PC-3 (cell line): ENCODE measurements at regions of chr1 and their contacts with region 1.

Region 1: GRCh38 chr1:241627453-241628259 is 12.5 kb downstream of the CHML start:
- DNase-seq: peak; percentile 97
- ATAC-seq: peak; percentile 66
- H3K4me3 ChIP-seq: no peak overlapping the region
- H3K27ac ChIP-seq: 0 out of 2 replicates have a peak overlapping the region, but pooled peaks have one; percentile 0
- H3K4me1 ChIP-seq: peaks cover 33% of the 10 kb centered on the region
- H3K27me3 ChIP-seq: no peaks in the 10 kb centered on the region
- CTCF ChIP-seq: peak; percentile 98

Region 2: DNA sequence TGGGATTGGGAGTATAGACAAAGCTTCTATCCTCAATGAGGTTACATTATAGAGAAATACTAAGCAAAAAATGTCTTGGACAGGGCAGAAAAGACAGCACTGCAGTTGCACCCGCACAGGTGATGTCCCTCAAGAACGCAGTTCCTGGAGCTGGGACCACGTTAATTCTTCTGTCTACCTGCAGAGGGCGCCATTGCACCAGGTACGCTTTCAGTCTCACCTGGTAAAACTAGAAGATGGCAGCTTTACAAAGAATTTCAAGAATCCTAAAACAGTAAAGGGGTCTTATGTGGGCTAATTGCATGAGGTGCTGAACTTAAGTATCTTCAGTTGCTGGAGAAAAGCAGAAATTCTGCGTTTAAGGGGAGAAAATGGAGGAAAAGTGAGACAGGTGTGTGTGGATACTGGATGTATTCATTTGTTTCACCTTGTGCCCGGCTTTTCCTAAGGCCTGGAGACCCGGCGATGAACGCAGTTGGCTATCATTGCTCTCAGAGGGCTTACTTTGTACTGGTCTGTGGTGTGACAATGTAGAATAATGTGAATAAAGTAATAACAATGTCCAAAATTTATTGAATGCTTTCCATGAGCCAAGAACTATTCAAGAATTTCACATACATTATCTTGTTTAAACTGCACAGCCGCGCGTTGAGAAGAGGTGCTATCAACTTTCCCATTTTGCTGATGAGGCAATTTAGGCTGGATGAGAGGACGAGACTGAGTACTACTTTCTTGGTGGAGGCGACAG is 739.4 kb before region 1 on chr1:
- CTCF ChIA-PET with region 1: no interaction called
- POLR2A ChIA-PET with region 1: no interaction called
- intact Hi-C with region 1: loop called (anchors 5 kb)
- DNase-seq: peak; percentile 83
- ATAC-seq: peak; percentile 64
- H3K4me3 ChIP-seq: no peak overlapping the region
- H3K27ac ChIP-seq: no peak overlapping the region
- H3K4me1 ChIP-seq: no peaks in the 10 kb centered on the region
- H3K27me3 ChIP-seq: peaks cover 25% of the 10 kb centered on the region
- CTCF ChIP-seq: peak; percentile 99

Region 3: DNA sequence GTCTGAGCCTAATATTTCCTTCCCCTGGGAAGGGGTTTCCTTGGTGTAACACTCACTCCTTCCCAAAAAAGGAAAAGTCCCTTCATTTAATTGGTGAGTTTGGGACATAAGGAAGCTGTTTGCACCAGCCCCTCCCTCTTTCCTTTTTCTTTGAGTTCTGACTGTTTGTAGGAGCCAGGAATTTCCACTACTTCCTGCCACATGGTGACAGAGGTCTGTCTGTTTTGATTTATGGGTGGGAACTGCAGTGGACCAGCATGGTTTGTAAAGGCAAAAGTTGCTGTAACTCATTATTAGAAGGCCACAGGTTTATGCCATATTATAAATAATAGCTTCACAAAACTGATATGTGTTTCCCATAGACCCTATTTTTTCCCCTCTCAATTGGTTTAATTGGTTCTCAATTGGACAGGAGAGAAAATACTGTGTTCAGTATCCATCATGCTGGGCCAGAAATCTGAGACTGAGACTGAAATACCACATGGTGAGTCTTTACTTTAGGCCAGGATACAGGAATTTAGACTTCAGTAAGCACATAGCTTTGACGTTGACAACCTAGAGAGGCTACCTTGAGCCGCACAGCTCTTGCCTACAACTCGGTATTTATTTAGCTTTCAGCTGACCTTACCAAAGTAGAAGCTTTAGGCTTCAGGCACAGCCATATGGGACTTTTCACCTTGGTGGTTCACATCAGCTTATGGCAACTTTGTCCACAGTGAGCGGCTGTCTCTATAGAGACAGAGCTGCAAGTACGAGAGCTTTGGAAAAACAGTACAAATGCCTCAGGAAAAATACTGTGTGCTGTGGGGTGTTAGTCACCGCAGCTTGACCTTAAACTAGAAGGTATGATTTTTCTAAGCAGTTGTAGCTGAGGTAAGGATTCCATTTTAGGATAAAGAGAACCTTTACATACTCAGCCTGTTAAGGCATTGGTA is 230.6 kb before region 1 on chr1:
- CTCF ChIA-PET with region 1: no interaction called
- POLR2A ChIA-PET with region 1: no interaction called
- intact Hi-C with region 1: no loop called
- DNase-seq: peak; percentile 60
- ATAC-seq: peak; percentile 56
- H3K4me3 ChIP-seq: no peak overlapping the region
- H3K27ac ChIP-seq: no peak overlapping the region
- H3K4me1 ChIP-seq: peaks cover 26% of the 10 kb centered on the region
- H3K27me3 ChIP-seq: no peaks in the 10 kb centered on the region
- CTCF ChIP-seq: no peak

Region 4: GRCh38 chr1:241423541-241424479 is 203.8 kb before region 1 on chr1:
- CTCF ChIA-PET with region 1: no interaction called
- POLR2A ChIA-PET with region 1: no interaction called
- intact Hi-C with region 1: loop called (anchors 5 kb)
- DNase-seq: peak; percentile 74
- ATAC-seq: peak; percentile 87
- H3K4me3 ChIP-seq: peak overlapping the region; percentile 78
- H3K27ac ChIP-seq: no peak overlapping the region
- H3K4me1 ChIP-seq: peaks cover 24% of the 10 kb centered on the region
- H3K27me3 ChIP-seq: no peaks in the 10 kb centered on the region
- CTCF ChIP-seq: peak; percentile 70

Region 5: DNA sequence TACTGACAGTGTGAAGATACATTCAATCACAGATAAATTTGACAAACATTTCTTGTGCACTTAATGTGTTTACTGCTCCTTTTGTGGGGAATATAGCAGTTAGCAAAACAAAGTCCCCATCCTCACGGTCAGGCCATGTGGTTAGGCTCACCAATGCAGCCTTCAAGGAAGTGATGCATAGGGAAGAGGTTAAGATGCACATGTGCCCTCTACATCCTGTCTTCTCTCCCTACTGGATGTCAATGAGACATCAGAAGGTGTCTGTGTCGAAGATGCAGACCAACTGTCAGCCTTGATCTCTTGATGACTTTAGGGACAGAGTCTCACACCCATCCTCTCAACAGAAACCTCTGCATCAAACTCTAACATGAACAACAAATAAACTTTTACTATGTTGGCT is 186.8 kb before region 1 on chr1:
- CTCF ChIA-PET with region 1: no interaction called
- POLR2A ChIA-PET with region 1: no interaction called
- intact Hi-C with region 1: no loop called
- DNase-seq: no peak
- ATAC-seq: no peak
- H3K4me3 ChIP-seq: no peak overlapping the region
- H3K27ac ChIP-seq: no peak overlapping the region
- H3K4me1 ChIP-seq: no peaks in the 10 kb centered on the region
- H3K27me3 ChIP-seq: no peaks in the 10 kb centered on the region
- CTCF ChIP-seq: no peak

Region 6: DNA sequence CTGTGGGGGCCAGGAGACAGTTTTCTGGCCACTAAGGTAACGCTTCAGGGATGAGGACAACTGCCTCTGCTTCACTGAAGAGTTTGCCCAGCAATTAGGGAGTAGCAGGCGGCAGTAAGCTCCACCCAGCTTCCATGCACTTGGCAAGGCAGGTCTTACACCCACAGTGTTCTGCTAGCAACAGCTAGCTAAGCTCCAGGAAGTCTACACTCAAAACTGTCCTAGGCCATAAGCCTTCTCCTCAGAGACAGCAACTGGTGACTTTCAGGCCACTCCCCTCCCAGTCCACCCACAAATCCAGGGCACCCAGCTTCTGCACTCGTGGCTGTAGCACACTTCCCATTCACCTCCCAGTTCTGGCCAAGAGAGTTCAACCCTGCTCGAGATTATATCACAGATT is 48.2 kb before region 1 on chr1:
- CTCF ChIA-PET with region 1: no interaction called
- POLR2A ChIA-PET with region 1: no interaction called
- intact Hi-C with region 1: no loop called
- DNase-seq: no peak
- ATAC-seq: no peak
- H3K4me3 ChIP-seq: no peak overlapping the region
- H3K27ac ChIP-seq: no peak overlapping the region
- H3K4me1 ChIP-seq: peaks cover 5% of the 10 kb centered on the region; the same call in 1 of the 2 replicates
- H3K27me3 ChIP-seq: no peaks in the 10 kb centered on the region
- CTCF ChIP-seq: no peak

Region 7: DNA sequence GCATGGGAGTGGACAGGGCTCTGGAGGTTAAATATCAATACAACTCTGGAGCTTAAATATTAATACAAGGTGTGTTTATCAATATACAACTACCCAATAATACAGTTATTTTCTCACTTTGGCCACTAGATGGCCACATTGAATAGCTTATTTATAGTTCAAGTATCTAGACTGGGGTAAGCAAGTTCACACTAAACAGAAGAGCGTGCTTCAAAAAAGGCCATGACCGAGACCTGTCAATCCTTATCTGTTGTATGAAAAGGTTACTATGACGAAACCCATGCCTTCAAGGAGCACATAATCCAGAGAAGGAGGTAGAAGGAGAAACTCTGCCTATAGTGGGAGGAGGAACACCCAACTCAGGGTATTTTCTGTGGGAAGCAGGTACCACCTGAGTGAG is 16.6 kb before region 1 on chr1:
- CTCF ChIA-PET with region 1: interaction called, 26 read pairs
- POLR2A ChIA-PET with region 1: no interaction called
- intact Hi-C with region 1: loop called (anchors 1 kb)
- DNase-seq: peak; percentile 96
- ATAC-seq: peak; percentile 7
- H3K4me3 ChIP-seq: no peak overlapping the region
- H3K27ac ChIP-seq: peak overlapping the region; percentile 85
- H3K4me1 ChIP-seq: peaks cover 94% of the 10 kb centered on the region
- H3K27me3 ChIP-seq: no peaks in the 10 kb centered on the region
- CTCF ChIP-seq: peak; percentile 97

Region 8: GRCh38 chr1:241834733-241835377 is 207.2 kb after region 1 on chr1:
- CTCF ChIA-PET with region 1: no interaction called
- POLR2A ChIA-PET with region 1: no interaction called
- intact Hi-C with region 1: loop called (anchors 1 kb)
- DNase-seq: peak; percentile 76
- ATAC-seq: peak; percentile 52
- H3K4me3 ChIP-seq: no peak overlapping the region
- H3K27ac ChIP-seq: no peak overlapping the region
- H3K4me1 ChIP-seq: peaks cover 28% of the 10 kb centered on the region
- H3K27me3 ChIP-seq: no peaks in the 10 kb centered on the region
- CTCF ChIP-seq: peak; percentile 93

Region 9: GRCh38 chr1:242055744-242056320 is 428.2 kb after region 1 on chr1:
- CTCF ChIA-PET with region 1: no interaction called
- POLR2A ChIA-PET with region 1: no interaction called
- intact Hi-C with region 1: no loop called
- DNase-seq: peak; percentile 67
- ATAC-seq: peak; percentile 64
- H3K4me3 ChIP-seq: no peak overlapping the region
- H3K27ac ChIP-seq: no peak overlapping the region
- H3K4me1 ChIP-seq: no peaks in the 10 kb centered on the region
- H3K27me3 ChIP-seq: peaks cover 22% of the 10 kb centered on the region
- CTCF ChIP-seq: no peak